ENCODE measurements at regions of chr4 and their contacts with region 1.

Region 1: GRCh38 chr4:157804986-157805385 is 367.8 kb downstream of the GASK1B start:
- DNase-seq: peak in 1 of 2 experiments; percentile 18
- H3K4me3 ChIP-seq: no peak overlapping the region
- H3K4me3 Mint-ChIP-seq: no peak overlapping the region
- H3K27ac Mint-ChIP-seq: no peak overlapping the region
- H3K4me1 ChIP-seq: peaks cover 9% of the 10 kb centered on the region; the same call in 1 of the 2 replicates
- H3K4me1 Mint-ChIP-seq: peaks cover 6% of the 10 kb centered on the region
- H3K27me3 ChIP-seq: no peaks in the 10 kb centered on the region
- H3K27me3 Mint-ChIP-seq: no peaks in the 10 kb centered on the region
- CTCF ChIP-seq: peak; percentile 17 to 34

Region 2: DNA sequence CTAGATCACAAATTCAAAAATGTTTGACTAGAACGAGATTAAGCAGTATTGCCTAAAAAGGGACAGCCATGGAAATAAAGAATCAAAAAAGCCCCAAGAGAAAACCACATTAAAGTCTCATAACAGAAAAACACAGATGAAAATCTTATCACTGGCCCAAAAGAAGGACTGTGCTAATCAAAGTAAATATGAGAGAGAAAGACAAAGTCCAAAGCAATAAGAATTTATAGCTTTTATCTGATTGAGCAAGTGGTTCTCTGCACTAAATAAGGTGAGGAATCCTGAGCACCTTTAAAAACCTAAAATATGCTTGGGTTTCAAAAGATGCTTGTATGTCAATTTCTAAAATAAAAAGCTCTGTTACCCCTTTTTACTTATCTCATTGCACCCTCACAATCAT is 41.5 kb before region 1 on chr4:
- CTCF ChIA-PET with region 1: no interaction called
- POLR2A ChIA-PET with region 1: no interaction called
- intact Hi-C with region 1: loop called (anchors 2 kb)
- DNase-seq: no peak
- H3K4me3 ChIP-seq: no peak overlapping the region
- H3K4me3 Mint-ChIP-seq: peak overlapping the region; percentile 49
- H3K27ac Mint-ChIP-seq: peak overlapping the region; percentile 71
- H3K4me1 ChIP-seq: peaks cover 7% of the 10 kb centered on the region; the same call in 1 of the 2 replicates
- H3K4me1 Mint-ChIP-seq: peaks cover 7% of the 10 kb centered on the region
- H3K27me3 ChIP-seq: no peaks in the 10 kb centered on the region
- H3K27me3 Mint-ChIP-seq: no peaks in the 10 kb centered on the region
- CTCF ChIP-seq: no peak

Region 3: DNA sequence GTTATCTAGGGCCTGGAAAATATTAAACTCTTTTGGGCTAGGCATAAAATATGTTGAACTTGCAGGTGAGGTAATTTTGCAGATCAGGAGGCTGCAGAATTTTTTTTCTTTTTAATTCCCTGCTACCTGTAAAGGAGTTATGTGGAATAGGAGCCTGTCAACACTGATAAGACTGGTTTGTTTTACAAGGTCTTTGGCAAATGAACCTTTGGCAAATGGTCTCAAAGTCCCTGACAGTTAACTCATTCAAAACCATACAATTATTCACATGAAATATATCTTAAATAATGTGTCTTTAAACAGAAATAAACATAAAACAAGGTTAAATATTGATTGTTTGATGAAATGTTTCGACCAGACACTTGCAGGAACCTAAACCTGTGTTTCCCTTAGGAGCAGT is 27.6 kb after region 1 on chr4:
- CTCF ChIA-PET with region 1: no interaction called
- POLR2A ChIA-PET with region 1: no interaction called
- intact Hi-C with region 1: loop called (anchors 2 kb)
- DNase-seq: peak in 1 of 2 experiments; percentile 4
- H3K4me3 ChIP-seq: no peak overlapping the region
- H3K4me3 Mint-ChIP-seq: no peak overlapping the region
- H3K27ac Mint-ChIP-seq: no peak overlapping the region
- H3K4me1 ChIP-seq: peaks cover 4% of the 10 kb centered on the region; the same call in 1 of the 2 replicates
- H3K4me1 Mint-ChIP-seq: no peaks in the 10 kb centered on the region
- H3K27me3 ChIP-seq: no peaks in the 10 kb centered on the region
- H3K27me3 Mint-ChIP-seq: no peaks in the 10 kb centered on the region
- CTCF ChIP-seq: no peak